OCI-LY7 (cell line): ENCODE measurements at regions of chr7 and their contacts with region 1.

Region 1: GRCh38 chr7:127708788-127709187 is 56.8 kb downstream of the SND1 start:
- DNase-seq: peak; percentile 80
- H3K4me3 ChIP-seq: no peak overlapping the region
- H3K27ac ChIP-seq: no peak overlapping the region
- H3K4me1 ChIP-seq: no peaks in the 10 kb centered on the region
- CTCF ChIP-seq: peak; percentile 89

Region 2: DNA sequence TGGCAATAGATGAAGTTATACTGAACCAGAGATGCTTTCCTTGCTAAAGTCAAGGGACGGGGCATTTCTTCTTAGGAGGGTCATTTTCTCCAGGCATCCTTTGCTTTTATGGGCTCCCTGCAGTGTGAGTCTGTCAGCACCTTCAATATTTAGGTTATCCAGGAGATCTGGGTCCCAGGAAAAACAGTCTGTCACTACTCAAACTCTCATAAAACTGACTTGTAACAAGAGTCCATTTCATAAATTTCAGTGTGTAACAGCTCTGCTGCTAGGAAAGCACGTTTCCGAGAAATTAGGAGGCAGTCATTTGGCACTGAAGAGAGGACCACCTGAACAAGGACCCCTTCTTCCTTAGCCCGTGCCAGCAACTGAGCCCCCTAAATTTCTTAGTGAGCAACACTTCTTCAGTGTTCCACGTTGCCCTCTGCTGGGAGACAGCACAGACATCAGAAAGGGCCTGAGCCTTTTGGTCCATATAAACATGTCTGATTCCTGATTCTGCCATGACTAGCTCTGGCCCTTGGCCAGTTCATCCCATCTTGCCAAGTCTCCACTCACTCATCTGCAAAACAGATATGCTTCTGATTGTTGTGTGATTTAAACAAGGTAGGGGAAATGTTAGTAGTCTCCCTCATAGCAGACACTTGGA is 130.6 kb before region 1 on chr7:
- CTCF ChIA-PET with region 1: no interaction called
- POLR2A ChIA-PET with region 1: no interaction called
- intact Hi-C with region 1: no loop called
- DNase-seq: no peak
- H3K4me3 ChIP-seq: no peak overlapping the region
- H3K27ac ChIP-seq: no peak overlapping the region
- H3K4me1 ChIP-seq: peaks cover under 1% of the 10 kb centered on the region
- CTCF ChIP-seq: peak; percentile 59

Region 3: DNA sequence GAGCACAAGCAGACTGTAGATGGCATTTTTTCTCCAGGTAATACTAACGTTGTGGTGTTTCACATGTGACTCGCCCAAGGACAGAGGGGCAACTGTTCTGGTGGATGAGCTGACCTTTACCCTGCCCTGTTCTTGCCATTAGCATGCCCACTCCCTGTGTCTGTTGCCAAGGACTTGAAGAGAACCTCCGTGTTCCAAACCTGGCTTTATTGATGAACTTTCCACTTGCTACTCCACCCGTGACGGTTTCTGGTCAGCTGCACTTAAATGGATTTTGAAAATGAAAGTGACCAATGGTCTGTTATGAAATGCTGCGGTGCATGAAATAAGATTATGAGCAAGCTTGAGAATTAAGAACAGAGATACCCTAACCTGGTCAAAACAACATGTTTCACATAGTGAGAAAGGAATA is 292.1 kb after region 1 on chr7:
- CTCF ChIA-PET with region 1: no interaction called
- POLR2A ChIA-PET with region 1: no interaction called
- intact Hi-C with region 1: loop called (anchors 10 kb)
- DNase-seq: no peak
- H3K4me3 ChIP-seq: no peak overlapping the region
- H3K27ac ChIP-seq: no peak overlapping the region
- H3K4me1 ChIP-seq: peaks cover 41% of the 10 kb centered on the region
- CTCF ChIP-seq: no peak

Region 4: DNA sequence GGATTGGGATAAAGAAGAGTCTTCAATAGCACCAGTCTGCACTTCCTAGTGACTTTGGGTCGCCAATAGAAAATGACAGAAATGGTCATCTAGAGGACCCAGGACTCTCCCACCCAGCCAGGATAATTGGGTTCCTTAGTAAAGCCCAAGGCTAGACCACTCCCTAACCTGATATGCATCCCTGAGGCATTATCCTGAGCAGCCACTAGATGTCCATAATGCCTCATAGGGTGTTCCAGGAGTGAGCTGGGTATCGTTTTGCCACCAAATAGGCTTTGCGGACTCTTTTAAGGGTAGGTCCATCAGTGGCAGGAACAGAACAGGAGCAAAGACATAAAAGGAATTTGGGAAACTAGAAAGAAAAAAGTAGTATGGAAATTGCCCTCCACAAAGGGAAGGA is 326.9 kb after region 1 on chr7:
- CTCF ChIA-PET with region 1: interaction called, 3 read pairs
- POLR2A ChIA-PET with region 1: no interaction called
- intact Hi-C with region 1: loop called (anchors 5 kb)
- DNase-seq: peak; percentile 18
- H3K4me3 ChIP-seq: no peak overlapping the region
- H3K27ac ChIP-seq: no peak overlapping the region
- H3K4me1 ChIP-seq: no peaks in the 10 kb centered on the region
- CTCF ChIP-seq: peak; percentile 69